ENCODE measurements at regions of chr9 and their contacts with region 1.

Region 1: DNA sequence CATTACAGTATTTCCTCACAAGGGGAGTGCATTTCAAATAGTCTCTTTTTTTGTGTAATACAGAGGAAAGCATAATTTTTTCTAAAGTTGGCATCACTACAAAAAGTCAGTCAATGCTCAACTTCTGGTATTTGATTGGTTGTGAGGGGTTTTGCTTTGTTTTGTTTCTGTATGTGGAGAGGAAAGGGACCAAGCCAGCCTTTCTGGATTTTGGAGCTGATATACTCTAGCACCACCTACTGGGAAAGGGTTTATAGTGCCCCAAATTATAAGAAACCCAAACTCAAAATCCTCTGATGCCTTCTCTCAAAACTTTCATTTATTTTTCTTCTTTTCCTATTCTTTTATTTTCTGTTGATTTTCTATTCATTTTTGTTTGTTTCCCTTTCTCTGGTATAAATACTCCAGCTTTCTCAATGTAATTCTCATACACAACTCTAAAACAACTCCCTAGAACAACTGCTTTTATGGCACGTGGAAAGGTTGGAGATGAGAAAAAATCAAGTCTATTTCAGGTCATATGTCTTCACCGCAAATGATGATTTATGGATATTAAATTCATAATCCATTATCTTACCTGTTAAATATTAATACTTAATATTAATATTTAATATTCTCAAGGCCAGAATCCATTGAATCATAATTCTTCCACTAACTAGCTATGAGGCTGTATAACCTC is 69.5 kb upstream of the ANXA1 start:
- DNase-seq: peak; percentile 24
- H3K4me3 ChIP-seq: no peak overlapping the region
- H3K27ac ChIP-seq: no peak overlapping the region
- H3K4me1 ChIP-seq: no peaks in the 10 kb centered on the region
- H3K27me3 ChIP-seq: peaks cover 4% of the 10 kb centered on the region
- CTCF ChIP-seq: peak; percentile 74 to 83

Region 2: GRCh38 chr9:72856972-72857623 is 225.0 kb before region 1 on chr9:
- CTCF ChIA-PET with region 1: no interaction called
- dilution Hi-C with region 1: no loop called
- in situ Hi-C with region 1: no loop called
- intact Hi-C with region 1: loop called (anchors 1 kb)
- DNase-seq: peak; percentile 49
- H3K4me3 ChIP-seq: no peak overlapping the region
- H3K27ac ChIP-seq: no peak overlapping the region
- H3K4me1 ChIP-seq: no peaks in the 10 kb centered on the region
- H3K27me3 ChIP-seq: no peaks in the 10 kb centered on the region
- CTCF ChIP-seq: peak; percentile 59 to 63

Region 3: DNA sequence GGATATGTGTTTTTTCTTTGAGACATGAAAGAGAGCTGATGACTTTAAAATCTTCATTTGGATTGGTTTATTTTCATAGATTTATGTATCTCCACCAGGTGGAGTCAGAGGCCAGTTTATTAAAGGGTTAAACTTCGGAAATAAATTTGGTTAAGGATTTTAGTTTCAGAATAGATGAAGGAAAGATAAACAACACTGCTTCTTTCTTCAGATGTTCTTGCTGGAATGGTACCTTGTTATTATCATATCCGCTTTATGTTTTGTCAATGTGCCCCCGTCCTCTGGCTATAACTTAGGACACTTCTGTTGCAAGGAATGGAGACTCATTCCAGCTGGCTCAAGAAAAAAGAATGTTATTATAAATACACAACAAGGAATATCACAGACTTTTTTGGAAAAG is 210.4 kb before region 1 on chr9:
- CTCF ChIA-PET with region 1: interaction called, 3 read pairs
- dilution Hi-C with region 1: no loop called
- in situ Hi-C with region 1: no loop called
- intact Hi-C with region 1: loop called (anchors 1 kb)
- DNase-seq: peak; percentile 21
- H3K4me3 ChIP-seq: no peak overlapping the region
- H3K27ac ChIP-seq: no peak overlapping the region
- H3K4me1 ChIP-seq: no peaks in the 10 kb centered on the region
- H3K27me3 ChIP-seq: no peaks in the 10 kb centered on the region
- CTCF ChIP-seq: peak; percentile 19 to 52

Region 4: GRCh38 chr9:73011181-73011750 is 70.9 kb before region 1 on chr9:
- CTCF ChIA-PET with region 1: no interaction called
- dilution Hi-C with region 1: loop called (anchors 5 kb)
- in situ Hi-C with region 1: no loop called
- intact Hi-C with region 1: no loop called
- DNase-seq: no peak
- H3K4me3 ChIP-seq: no peak overlapping the region
- H3K27ac ChIP-seq: no peak overlapping the region
- H3K4me1 ChIP-seq: no peaks in the 10 kb centered on the region
- H3K27me3 ChIP-seq: no peaks in the 10 kb centered on the region
- CTCF ChIP-seq: no peak